Endothelial cell of umbilical vein (primary cell): ENCODE measurements at regions of chr9 and their contacts with region 1.

Region 1: DNA sequence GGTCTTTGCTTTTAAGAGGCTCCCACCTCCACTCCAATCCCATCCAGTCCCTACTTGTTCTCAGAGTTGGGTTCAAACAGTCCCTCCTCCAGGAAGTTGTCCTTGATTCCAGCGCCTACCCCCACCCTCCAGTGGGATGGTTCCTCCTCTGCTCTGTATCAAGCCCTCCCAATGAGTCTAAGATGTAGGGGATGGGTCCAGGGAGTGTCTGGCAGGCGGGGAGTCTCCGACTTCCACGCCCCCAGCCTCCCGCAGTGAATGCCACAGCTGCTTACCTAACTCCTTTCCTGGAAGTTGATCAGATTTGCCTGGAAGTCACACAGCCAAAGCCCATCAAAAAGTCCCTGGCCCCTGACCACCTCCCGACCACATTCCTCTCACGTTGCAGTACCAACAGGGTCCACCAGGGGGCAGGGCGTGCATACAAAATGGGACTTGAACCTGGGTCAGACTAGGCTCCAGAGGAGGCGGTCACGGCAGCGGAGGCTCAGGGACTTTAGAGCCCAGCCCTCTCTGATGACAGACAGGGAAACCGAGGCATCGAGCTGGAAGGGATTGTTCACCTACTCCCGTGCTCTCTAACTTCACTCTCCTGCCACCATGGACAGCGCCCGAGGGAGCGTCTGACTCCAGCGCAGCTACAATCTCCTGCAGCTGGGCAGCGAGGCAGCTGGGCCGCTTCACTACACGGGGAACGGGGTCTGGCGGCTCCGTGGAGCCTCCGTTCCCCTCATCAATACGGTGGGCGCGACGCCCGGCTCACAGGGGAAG is 25.0 kb upstream of the TDRD7 start:
- DNase-seq: peak; percentile 63
- H3K4me3 ChIP-seq: no peak overlapping the region
- H3K27ac ChIP-seq: no peak overlapping the region
- H3K4me1 ChIP-seq: no peaks in the 10 kb centered on the region
- H3K27me3 ChIP-seq: no peaks in the 10 kb centered on the region
- CTCF ChIP-seq: peak; percentile 97 to 98
- POLR2A ChIP-seq: no peak

Region 2: GRCh38 chr9:97398999-97399758 is 12.3 kb after region 1 on chr9:
- CTCF ChIA-PET with region 1: interaction called, 38 read pairs
- POLR2A ChIA-PET with region 1: no interaction called
- dilution Hi-C with region 1: no loop called
- intact Hi-C with region 1: loop called (anchors 1 kb)
- DNase-seq: peak; percentile 76
- H3K4me3 ChIP-seq: no peak overlapping the region
- H3K27ac ChIP-seq: no peak overlapping the region
- H3K4me1 ChIP-seq: no peaks in the 10 kb centered on the region
- H3K27me3 ChIP-seq: peaks cover 0 to 5% of the 10 kb centered on the region in 2 experiments
- CTCF ChIP-seq: peak; percentile 97 to 99
- POLR2A ChIP-seq: no peak

Region 3: GRCh38 chr9:97545486-97545885 is 158.6 kb after region 1 on chr9:
- CTCF ChIA-PET with region 1: no interaction called
- POLR2A ChIA-PET with region 1: no interaction called
- dilution Hi-C with region 1: no loop called
- intact Hi-C with region 1: no loop called
- DNase-seq: no peak
- H3K4me3 ChIP-seq: no peak overlapping the region
- H3K27ac ChIP-seq: no peak overlapping the region
- H3K4me1 ChIP-seq: no peaks in the 10 kb centered on the region
- H3K27me3 ChIP-seq: peaks cover 0 to 11% of the 10 kb centered on the region in 2 experiments
- CTCF ChIP-seq: no peak
- POLR2A ChIP-seq: no peak

Region 4: DNA sequence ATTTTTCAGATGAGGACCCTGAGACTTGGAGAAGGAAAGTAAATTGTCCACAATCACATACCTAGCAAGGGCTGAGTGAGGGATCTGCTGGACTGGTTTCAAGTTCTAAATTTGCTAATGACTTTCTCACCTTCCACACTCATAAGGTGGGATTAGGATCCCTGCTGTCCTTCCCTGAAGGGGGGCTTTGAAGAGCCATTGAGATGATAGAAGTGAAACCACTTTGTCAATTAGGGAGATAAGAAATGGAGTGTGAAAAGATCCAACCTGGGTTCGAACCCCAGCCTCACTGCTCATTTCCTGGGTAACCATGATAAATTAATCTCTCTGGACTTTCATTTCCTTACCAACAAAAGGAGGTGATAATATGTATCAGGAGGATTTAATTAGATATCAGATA is 433.5 kb after region 1 on chr9:
- CTCF ChIA-PET with region 1: no interaction called
- POLR2A ChIA-PET with region 1: no interaction called
- dilution Hi-C with region 1: no loop called
- intact Hi-C with region 1: no loop called
- DNase-seq: no peak
- H3K4me3 ChIP-seq: no peak overlapping the region
- H3K27ac ChIP-seq: no peak overlapping the region
- H3K4me1 ChIP-seq: no peaks in the 10 kb centered on the region
- H3K27me3 ChIP-seq: peaks cover 22 to 43% of the 10 kb centered on the region in 2 experiments
- CTCF ChIP-seq: no peak
- POLR2A ChIP-seq: no peak